ENCODE measurements at regions of chr19 and their contacts with region 1.

Region 1: DNA sequence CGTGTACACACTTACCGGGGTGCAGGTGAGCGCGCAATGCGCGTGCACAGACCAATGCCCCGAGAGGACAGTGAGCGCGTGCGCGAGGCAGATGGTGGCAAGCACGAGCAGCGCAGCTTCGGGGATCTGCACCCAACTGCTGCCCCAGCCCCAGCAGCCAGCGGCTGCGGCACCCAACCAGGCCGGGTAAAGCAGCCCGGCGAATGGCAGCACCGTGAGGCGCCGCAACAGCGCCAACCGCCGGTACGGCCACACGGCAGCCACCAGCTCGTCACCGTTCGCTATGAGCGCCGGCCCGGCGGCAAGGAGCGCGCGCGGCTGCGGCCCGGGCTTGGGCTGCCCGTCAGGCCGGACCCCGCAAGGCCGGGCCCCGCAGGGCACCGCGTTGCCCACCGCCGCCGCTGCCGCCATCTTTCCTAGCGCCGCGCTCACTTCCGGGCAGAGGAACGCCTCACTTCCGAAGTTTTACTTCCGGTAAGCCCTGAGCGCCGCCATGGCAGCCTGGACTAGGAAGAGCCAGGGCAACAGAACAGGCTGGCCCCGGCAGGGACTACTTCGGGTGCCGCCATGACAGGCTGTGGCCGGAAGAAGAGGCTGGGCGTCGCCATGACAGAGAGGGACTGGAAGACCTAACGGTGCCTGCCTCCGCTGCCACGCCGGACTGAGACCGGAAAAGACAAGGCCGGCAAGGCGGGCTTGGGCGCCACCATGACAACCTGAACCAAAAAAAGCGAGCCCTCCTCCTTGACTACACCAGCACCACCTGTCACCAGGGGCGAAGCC is at the start of gene ATP13A1:
- DNase-seq: peak; percentile 92
- ATAC-seq: peak; percentile 78
- H3K4me3 ChIP-seq: peak within 1 kb of the TSS; percentile 87
- H3K27ac ChIP-seq: peak within 1 kb of the TSS; percentile 97
- H3K4me1 ChIP-seq: peaks cover 11% of the 10 kb centered on the region
- H3K27me3 ChIP-seq: no peaks in the 10 kb centered on the region
- CTCF ChIP-seq: no peak; a peak in 1 of 6 replicates
- EP300 ChIP-seq: no peak
- POLR2A ChIP-seq: peak; percentile 88
- RAD21 ChIP-seq: no peak
- polyA plus RNA-seq, gene ATP13A1: 0.37 to 1.4 TPM

Region 2: DNA sequence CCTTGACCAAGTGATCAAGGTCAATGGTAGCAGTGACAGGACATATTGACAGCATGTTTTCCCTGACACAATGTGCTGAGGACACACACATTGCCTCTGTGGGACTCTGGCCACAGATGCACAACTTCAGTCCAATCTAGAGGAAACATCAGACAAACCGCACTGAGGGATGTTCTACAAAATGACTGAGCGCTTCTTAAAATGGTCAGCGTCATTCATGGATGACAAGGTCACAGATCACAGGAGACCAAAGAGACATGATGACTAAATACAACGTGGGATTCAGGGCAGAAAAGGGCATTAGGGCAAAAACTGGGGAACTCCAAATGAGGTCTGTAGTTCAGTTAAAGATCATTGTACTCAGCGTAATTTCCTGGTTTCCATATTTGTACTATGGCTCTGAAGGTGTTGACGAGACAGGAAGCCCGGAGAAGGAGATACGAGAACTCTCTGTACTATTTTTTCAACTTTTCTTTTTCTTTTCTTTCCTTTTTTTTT is 65.6 kb before region 1 on chr19:
- CTCF ChIA-PET with region 1: interaction called, 3 read pairs
- POLR2A ChIA-PET with region 1: interaction called, 18 read pairs
- RAD21 ChIA-PET with region 1: interaction called, 13 read pairs
- SMC1A ChIA-PET with region 1: no interaction called
- in situ Hi-C with region 1: no loop called
- intact Hi-C with region 1: loop called (anchors 2 kb)
- DNase-seq: peak; percentile 99
- ATAC-seq: peak; percentile 83
- H3K4me3 ChIP-seq: no peak overlapping the region
- H3K27ac ChIP-seq: peak overlapping the region; percentile 81
- H3K4me1 ChIP-seq: peaks cover 62% of the 10 kb centered on the region
- H3K27me3 ChIP-seq: no peaks in the 10 kb centered on the region
- CTCF ChIP-seq: no peak
- EP300 ChIP-seq: peak; percentile 83 to 87; a peak in 3 of 4 replicates
- POLR2A ChIP-seq: peak; percentile 71
- RAD21 ChIP-seq: no peak

Region 3: GRCh38 chr19:19643158-19644053 is 20.0 kb before region 1 on chr19 and contains the start of gene GMIP:
- CTCF ChIA-PET with region 1: interaction called, 10 read pairs
- POLR2A ChIA-PET with region 1: interaction called, 10 read pairs
- RAD21 ChIA-PET with region 1: interaction called, 5 read pairs
- SMC1A ChIA-PET with region 1: interaction called, 3 read pairs
- in situ Hi-C with region 1: no loop called
- intact Hi-C with region 1: no loop called
- DNase-seq: no peak
- ATAC-seq: peak; percentile 94
- H3K4me3 ChIP-seq: peak within 1 kb of the TSS; percentile 96
- H3K27ac ChIP-seq: peak within 1 kb of the TSS; percentile 99
- H3K4me1 ChIP-seq: peaks cover 4% of the 10 kb centered on the region
- H3K27me3 ChIP-seq: no peaks in the 10 kb centered on the region
- CTCF ChIP-seq: peak; percentile 78 to 90 (median 81)
- EP300 ChIP-seq: no peak
- POLR2A ChIP-seq: peak; percentile 78
- RAD21 ChIP-seq: peak; percentile 90
- polyA plus RNA-seq, gene GMIP: 1.5 to 2.8 TPM

Region 4: DNA sequence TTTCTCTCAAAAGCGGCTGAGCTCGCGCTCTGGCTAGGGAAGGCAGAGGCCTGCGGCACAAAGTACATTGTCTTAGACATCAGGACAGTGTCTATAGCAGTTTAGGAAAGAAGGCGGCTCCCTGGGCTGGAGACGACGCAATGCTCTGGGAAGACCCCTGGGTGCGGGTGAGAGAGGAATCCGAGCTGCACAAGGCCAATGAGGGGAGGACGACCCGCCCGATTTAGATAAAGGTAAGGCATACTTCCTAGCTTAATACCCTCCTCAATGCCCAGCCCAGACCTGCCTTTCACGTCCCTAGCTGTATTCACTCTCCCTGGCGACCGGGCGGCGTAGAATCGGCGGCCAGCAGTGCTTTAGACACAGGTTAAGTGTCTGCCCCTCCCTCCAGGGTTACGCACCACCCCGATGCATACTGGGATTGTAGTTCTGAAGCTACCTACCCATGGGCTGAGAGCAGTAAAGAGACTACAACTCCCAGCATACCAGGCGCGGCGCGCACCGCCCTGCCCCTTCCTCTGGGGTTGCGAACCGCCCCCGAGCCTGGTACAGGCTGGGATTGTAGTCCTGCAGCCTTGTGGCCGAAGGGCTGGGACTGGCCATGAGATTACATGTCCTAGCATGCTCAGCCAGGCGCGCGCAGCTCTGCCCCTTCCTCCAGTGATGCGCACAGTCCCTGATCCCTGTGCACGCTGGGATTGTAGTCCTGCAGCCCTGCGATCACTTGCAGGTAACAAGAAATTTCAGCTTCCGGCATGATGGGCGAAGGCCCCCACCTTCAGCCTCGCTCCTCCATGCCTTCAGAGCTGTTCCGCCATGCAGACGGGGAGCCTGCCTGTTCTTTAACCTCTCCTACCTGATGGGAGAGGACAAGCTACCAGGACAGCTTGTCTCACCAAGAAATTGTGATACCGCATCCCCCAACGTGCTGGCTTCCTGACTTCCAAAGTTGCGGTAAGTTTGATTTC is 112.9 kb after region 1 on chr19:
- CTCF ChIA-PET with region 1: interaction called, 3 read pairs
- POLR2A ChIA-PET with region 1: interaction called, 9 read pairs
- RAD21 ChIA-PET with region 1: interaction called, 11 read pairs
- SMC1A ChIA-PET with region 1: interaction called, 10 read pairs
- in situ Hi-C with region 1: loop called (anchors 5 kb)
- intact Hi-C with region 1: loop called (anchors 2 kb)
- DNase-seq: peak; percentile 96
- ATAC-seq: peak; percentile 99
- H3K4me3 ChIP-seq: peak overlapping the region; percentile 78
- H3K27ac ChIP-seq: peak overlapping the region; percentile 68
- H3K4me1 ChIP-seq: no peaks in the 10 kb centered on the region
- H3K27me3 ChIP-seq: no peaks in the 10 kb centered on the region
- CTCF ChIP-seq: peak in 1 of 3 experiments; percentile 8; a peak in 1 of 6 replicates
- EP300 ChIP-seq: no peak
- POLR2A ChIP-seq: peak; percentile 77
- RAD21 ChIP-seq: no peak

Region 5: GRCh38 chr19:19865739-19866481 is 202.5 kb after region 1 on chr19 and contains the start of gene ZNF253:
- CTCF ChIA-PET with region 1: interaction called, 3 read pairs
- POLR2A ChIA-PET with region 1: interaction called, 11 read pairs
- RAD21 ChIA-PET with region 1: interaction called, 7 read pairs
- SMC1A ChIA-PET with region 1: interaction called, 7 read pairs
- in situ Hi-C with region 1: no loop called
- intact Hi-C with region 1: loop called (anchors 2 kb)
- DNase-seq: peak; percentile 83
- ATAC-seq: peak; percentile 96
- H3K4me3 ChIP-seq: peak within 1 kb of the TSS; percentile 85
- H3K27ac ChIP-seq: peak within 1 kb of the TSS; percentile 96
- H3K4me1 ChIP-seq: no peaks in the 10 kb centered on the region
- H3K27me3 ChIP-seq: no peaks in the 10 kb centered on the region
- CTCF ChIP-seq: no peak
- EP300 ChIP-seq: no peak
- POLR2A ChIP-seq: peak; percentile 91
- RAD21 ChIP-seq: no peak
- polyA plus RNA-seq, gene ZNF253: 2.6 to 3.3 TPM

Region 6: DNA sequence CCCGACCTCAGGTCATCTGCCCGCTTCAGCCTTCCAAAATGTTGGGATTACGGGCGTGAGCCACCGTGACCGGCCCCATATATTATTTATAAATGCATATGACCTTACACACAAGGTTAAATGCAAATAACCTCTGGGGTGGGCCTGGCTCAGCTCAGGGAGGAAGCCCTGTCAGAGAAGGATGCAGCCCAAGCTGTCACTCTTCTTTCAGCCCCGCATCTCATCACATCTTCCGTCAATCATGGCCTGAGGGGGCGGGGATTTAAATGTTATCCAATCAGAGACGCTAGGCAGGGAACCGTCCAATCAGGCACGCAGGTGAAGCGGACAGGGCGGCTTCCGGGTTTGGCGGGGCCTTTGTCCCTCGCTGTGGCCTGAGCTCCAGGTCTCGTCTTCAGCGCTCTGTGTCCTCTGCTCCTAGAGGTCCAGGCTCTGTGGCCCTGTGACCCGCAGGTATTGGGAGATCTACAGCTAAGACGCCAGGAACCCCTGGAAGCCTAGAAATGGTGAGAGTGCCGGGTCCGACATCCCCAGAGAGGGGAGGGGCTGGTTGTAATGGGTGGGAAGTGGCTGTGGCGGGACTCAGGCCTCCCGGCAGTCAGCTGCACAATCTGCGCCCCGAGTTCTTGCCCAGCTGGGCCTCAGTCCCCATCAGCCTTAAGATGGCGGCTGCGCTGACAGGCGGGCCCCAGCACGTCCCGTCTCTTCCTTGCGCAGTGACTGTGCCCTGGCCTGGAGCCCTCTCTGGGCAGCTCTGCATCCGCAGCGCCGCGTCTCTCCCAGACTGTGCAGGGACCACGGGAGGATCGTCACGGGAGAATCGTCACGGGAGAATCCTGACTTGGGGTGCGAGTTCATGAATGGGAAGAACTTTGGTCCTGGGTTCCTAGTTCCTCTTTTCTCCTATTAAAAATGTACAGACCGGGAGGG is 1357.1 kb after region 1 on chr19 and contains the start of gene ZNF430:
- CTCF ChIA-PET with region 1: no interaction called
- POLR2A ChIA-PET with region 1: interaction called, 3 read pairs
- RAD21 ChIA-PET with region 1: no interaction called
- SMC1A ChIA-PET with region 1: no interaction called
- in situ Hi-C with region 1: loop called (anchors 10 kb)
- intact Hi-C with region 1: no loop called
- DNase-seq: peak; percentile 94
- ATAC-seq: peak; percentile 96
- H3K4me3 ChIP-seq: peak within 1 kb of the TSS; percentile 78
- H3K27ac ChIP-seq: peak within 1 kb of the TSS; percentile 89
- H3K4me1 ChIP-seq: no peaks in the 10 kb centered on the region
- H3K27me3 ChIP-seq: no peaks in the 10 kb centered on the region
- CTCF ChIP-seq: no peak
- EP300 ChIP-seq: no peak
- POLR2A ChIP-seq: peak; percentile 91
- RAD21 ChIP-seq: no peak
- polyA plus RNA-seq, gene ZNF430: 4.6 to 6.0 TPM